ENCODE measurements at regions of chr1 and their contacts with region 1.

Region 1: DNA sequence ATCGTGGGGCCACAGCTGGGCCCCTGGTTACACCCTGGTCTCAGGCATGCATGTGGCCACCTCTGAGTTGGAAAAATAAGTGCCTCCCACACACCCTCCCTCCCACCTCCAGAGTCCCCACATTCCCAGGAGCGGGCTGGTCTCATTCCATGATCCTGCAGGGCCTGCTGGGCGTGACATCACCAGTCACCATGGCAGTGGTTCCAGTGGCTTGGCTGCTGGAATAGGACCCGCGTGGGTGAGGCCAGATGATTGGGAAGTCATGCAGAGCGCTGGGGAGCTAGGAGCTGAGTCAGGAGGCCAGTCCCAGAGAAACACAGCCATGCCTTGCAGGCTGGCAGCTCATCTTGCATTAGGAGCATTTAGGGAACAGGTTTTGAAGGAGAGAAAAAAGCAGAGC is 125.4 kb upstream of the TMEM51 start:
- DNase-seq: peak; percentile 23 to 33
- ATAC-seq: peak in 7 of 8 donors; percentile 28 to 70 (median 60)
- H3K4me3 ChIP-seq: no peak overlapping the region
- H3K27ac ChIP-seq: no peak overlapping the region
- H3K4me1 ChIP-seq: peaks cover 0 to 8% (median 0%) of the 10 kb centered on the region in 9 donors
- H3K27me3 ChIP-seq: no peaks in the 10 kb centered on the region
- CTCF ChIP-seq: no peak

Region 2: GRCh38 chr1:14113841-14114567 is 914.1 kb before region 1 on chr1:
- intact Hi-C with region 1: loop called in 1 of 10 experiments (anchors 10 kb)
- DNase-seq: peak; percentile 20 to 31
- ATAC-seq: peak; percentile 56 to 77 (median 62)
- H3K4me3 ChIP-seq: no peak overlapping the region
- H3K27ac ChIP-seq: no peak overlapping the region
- H3K4me1 ChIP-seq: peaks cover 0 to 6% (median 0%) of the 10 kb centered on the region in 9 donors
- H3K27me3 ChIP-seq: no peaks in the 10 kb centered on the region
- CTCF ChIP-seq: peak; percentile 14 to 67 (median 57)

Region 3: DNA sequence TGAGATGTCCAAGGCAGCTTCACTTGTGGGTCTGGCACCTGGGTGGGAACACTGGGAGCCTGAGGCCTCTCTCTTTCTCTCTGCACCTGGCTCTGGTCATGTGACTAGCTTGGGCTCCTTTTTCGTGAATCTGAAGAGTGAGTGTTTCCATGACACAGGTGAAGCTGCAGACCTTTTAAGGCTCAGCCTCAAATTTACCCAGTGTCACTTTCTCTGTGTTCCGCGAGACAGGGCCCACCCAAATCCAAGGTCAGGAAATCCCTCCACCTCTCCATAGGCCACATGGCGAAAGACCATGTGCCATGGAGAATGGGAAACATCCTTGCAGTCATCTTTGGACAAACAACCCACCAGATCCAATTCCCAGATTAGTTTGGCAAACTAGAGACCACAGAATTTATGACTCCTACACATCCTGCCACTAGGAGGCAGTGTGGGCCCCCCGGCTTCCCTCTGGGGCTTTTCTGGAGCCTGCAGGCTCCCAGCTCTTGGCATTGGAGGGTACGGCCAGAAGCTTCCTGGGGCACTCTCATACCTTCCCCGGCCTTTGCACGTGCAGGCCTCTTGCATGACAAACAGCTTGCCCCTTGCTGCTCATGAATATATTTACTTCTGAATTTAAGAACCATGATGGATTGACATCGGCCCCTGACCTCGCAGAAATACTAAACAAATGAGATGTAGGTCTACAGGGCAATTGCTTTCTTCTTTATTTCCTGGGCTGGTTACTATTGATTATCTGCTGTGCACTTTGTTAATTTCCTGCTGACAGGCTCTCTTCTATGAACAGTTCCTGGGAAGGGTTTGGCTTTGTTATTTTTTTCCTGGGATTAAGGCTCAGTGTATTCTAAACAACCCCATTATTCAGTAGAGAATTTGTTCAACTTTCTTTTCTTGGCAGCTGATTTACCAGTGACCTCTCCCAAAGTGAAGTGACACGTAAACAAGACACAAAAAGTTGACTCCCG is 248.9 kb before region 1 on chr1:
- intact Hi-C with region 1: loop called in 3 of 10 experiments (anchors 2 to 5 kb)
- DNase-seq: peak; percentile 6 to 25
- ATAC-seq: no peak
- H3K4me3 ChIP-seq: no peak overlapping the region
- H3K27ac ChIP-seq: no peak overlapping the region
- H3K4me1 ChIP-seq: peaks cover 0 to 3% (median 0%) of the 10 kb centered on the region in 9 donors
- H3K27me3 ChIP-seq: peaks cover 0 to 4% (median 0%) of the 10 kb centered on the region in 7 donors
- CTCF ChIP-seq: peak; percentile 48 to 76 (median 62)

Region 4: DNA sequence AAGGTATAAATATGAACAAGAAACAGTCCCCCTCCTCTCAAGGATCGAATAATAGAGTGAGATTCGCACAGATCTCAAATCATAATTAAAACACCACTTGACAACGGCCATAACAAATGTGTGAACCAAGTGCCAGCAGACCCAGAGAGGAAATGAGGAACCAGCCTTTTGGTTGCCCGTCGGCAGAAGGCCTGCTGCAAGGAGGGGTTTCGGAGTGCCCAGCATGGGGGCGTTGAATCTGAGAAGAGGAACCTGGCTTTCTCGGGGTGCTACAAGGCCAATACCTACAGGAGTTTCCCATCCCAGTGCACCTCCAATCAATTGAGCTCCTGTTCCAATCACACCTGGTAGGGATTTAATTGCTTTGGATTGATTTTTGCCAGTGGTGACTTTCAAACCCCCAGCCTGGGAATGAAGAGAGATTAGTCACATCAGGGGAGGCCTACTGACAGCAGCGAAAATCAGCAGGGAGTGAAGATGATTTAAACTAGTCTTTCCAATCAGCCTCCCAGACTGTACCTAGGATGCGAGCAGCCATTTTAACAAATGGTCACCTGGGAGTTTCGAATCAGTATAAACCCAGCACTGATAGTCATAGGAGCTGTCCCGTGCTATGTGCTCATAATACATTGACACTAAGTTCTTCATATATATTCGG is 165.9 kb before region 1 on chr1:
- intact Hi-C with region 1: no loop called
- DNase-seq: no peak
- ATAC-seq: no peak
- H3K4me3 ChIP-seq: no peak overlapping the region
- H3K27ac ChIP-seq: no peak overlapping the region
- H3K4me1 ChIP-seq: no peaks in the 10 kb centered on the region
- H3K27me3 ChIP-seq: peaks cover 0 to 42% (median 14%) of the 10 kb centered on the region in 7 donors
- CTCF ChIP-seq: no peak

Region 5: GRCh38 chr1:14915356-14916054 is 112.6 kb before region 1 on chr1:
- intact Hi-C with region 1: loop called in 3 of 10 experiments (anchors 2 to 5 kb)
- DNase-seq: peak; percentile 41 to 42
- ATAC-seq: peak in 6 of 8 donors; percentile 52 to 73 (median 57)
- H3K4me3 ChIP-seq: no peak overlapping the region
- H3K27ac ChIP-seq: no peak overlapping the region
- H3K4me1 ChIP-seq: no peaks in the 10 kb centered on the region
- H3K27me3 ChIP-seq: no peaks in the 10 kb centered on the region
- CTCF ChIP-seq: peak; percentile 83 to 96 (median 90)

Region 6: GRCh38 chr1:14923727-14924452 is 104.2 kb before region 1 on chr1:
- intact Hi-C with region 1: loop called (anchors 2 to 5 kb)
- DNase-seq: peak; percentile 65 to 73
- ATAC-seq: peak; percentile 62 to 82 (median 71)
- H3K4me3 ChIP-seq: peak overlapping the region in 6 of 10 donors; percentile 21 to 93 (median 46)
- H3K27ac ChIP-seq: peak overlapping the region in 6 of 10 donors; percentile 5 to 54 (median 39)
- H3K4me1 ChIP-seq: peaks cover 8 to 29% (median 13%) of the 10 kb centered on the region in 9 donors
- H3K27me3 ChIP-seq: peaks cover 0 to 42% (median 7%) of the 10 kb centered on the region in 7 donors
- CTCF ChIP-seq: no peak